ENCODE measurements at regions of chr5 and their contacts with region 1.

Region 1: DNA sequence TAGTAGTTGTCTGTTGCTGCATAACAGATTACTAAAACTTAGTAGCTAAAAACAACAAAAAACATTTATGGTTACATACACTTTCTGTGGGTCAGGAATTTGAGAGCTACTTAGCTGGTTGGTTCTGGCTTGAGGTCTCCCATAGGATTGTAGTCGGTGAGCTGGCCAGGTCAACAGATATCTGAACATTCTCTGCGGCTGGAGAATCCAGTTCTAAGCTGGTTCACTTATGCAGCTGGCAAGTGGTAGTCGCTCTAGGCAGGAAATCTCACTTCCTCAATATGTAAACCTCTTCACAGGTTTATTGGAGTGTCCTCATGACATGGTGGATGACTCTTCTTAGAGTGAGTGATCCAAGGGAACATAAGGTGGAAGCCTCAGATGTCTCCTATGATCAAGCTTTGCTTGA is 65.7 kb upstream of the TNFAIP8 start:
- DNase-seq: peak; percentile 66
- ATAC-seq: peak; percentile 90
- H3K4me3 ChIP-seq: peak overlapping the region; percentile 38
- H3K27ac ChIP-seq: peak overlapping the region; percentile 84
- H3K4me1 ChIP-seq: peaks cover 46% of the 10 kb centered on the region
- H3K27me3 ChIP-seq: no peaks in the 10 kb centered on the region
- CTCF ChIP-seq: no peak
- EP300 ChIP-seq: peak; percentile 69 to 79; a peak in 2 of 4 replicates
- POLR2A ChIP-seq: no peak
- RAD21 ChIP-seq: no peak

Region 2: DNA sequence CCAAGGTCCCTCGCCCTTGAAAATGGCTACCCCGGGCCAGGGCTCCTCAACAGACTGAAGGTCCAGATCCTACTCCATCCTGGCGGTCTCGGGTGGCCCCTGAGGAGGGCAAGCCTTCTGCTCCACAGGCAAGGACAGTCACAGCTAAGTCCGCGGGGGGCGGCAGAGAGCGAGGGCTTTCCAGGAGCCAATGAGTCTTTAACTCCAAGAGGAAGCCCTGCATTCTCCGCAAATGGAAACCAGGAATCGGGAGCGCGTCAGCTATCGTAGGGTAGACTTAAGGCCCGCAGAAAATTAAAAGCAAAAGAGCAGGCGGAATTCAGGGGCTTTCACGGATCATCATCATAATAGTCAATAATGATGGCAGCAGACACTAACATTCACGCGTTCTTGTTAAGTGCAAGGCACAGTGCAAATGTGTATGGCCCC is 22.2 kb before region 1 on chr5:
- CTCF ChIA-PET with region 1: interaction called, 29 read pairs
- POLR2A ChIA-PET with region 1: interaction called, 57 read pairs
- RAD21 ChIA-PET with region 1: interaction called, 46 read pairs
- SMC1A ChIA-PET with region 1: interaction called, 181 read pairs
- in situ Hi-C with region 1: no loop called
- intact Hi-C with region 1: loop called (anchors 2 kb)
- DNase-seq: peak; percentile 81
- ATAC-seq: peak; percentile 81
- H3K4me3 ChIP-seq: peak overlapping the region; percentile 99
- H3K27ac ChIP-seq: peak overlapping the region; percentile 90
- H3K4me1 ChIP-seq: peaks cover 13% of the 10 kb centered on the region
- H3K27me3 ChIP-seq: no peaks in the 10 kb centered on the region
- CTCF ChIP-seq: peak; percentile 63 to 80 (median 68)
- EP300 ChIP-seq: no peak
- POLR2A ChIP-seq: no peak
- RAD21 ChIP-seq: peak; percentile 46; the same call in 1 of the 2 replicates

Region 3: GRCh38 chr5:119274767-119275130 is 15.4 kb before region 1 on chr5:
- CTCF ChIA-PET with region 1: interaction called, 29 read pairs
- POLR2A ChIA-PET with region 1: interaction called, 57 read pairs
- RAD21 ChIA-PET with region 1: interaction called, 46 read pairs
- SMC1A ChIA-PET with region 1: interaction called, 181 read pairs
- in situ Hi-C with region 1: no loop called
- intact Hi-C with region 1: loop called (anchors 2 kb)
- DNase-seq: no peak
- ATAC-seq: peak; percentile 23
- H3K4me3 ChIP-seq: peak overlapping the region; percentile 65; the same call in 1 of the 2 replicates
- H3K27ac ChIP-seq: peak overlapping the region; percentile 77
- H3K4me1 ChIP-seq: peaks cover 66% of the 10 kb centered on the region
- H3K27me3 ChIP-seq: no peaks in the 10 kb centered on the region
- CTCF ChIP-seq: no peak
- EP300 ChIP-seq: no peak
- POLR2A ChIP-seq: no peak
- RAD21 ChIP-seq: no peak

Region 4: GRCh38 chr5:119302916-119303897 is 13.0 kb after region 1 on chr5:
- CTCF ChIA-PET with region 1: interaction called, 21 read pairs
- POLR2A ChIA-PET with region 1: interaction called, 21 read pairs
- RAD21 ChIA-PET with region 1: interaction called, 9 read pairs
- SMC1A ChIA-PET with region 1: interaction called, 47 read pairs
- in situ Hi-C with region 1: no loop called
- intact Hi-C with region 1: no loop called
- DNase-seq: no peak
- ATAC-seq: peak; percentile 65
- H3K4me3 ChIP-seq: no peak overlapping the region
- H3K27ac ChIP-seq: no peak overlapping the region
- H3K4me1 ChIP-seq: peaks cover 23% of the 10 kb centered on the region
- H3K27me3 ChIP-seq: no peaks in the 10 kb centered on the region
- CTCF ChIP-seq: no peak
- EP300 ChIP-seq: no peak
- POLR2A ChIP-seq: no peak
- RAD21 ChIP-seq: no peak

Region 5: GRCh38 chr5:119309326-119309725 is 19.2 kb after region 1 on chr5:
- CTCF ChIA-PET with region 1: interaction called, 24 read pairs
- POLR2A ChIA-PET with region 1: interaction called, 21 read pairs
- RAD21 ChIA-PET with region 1: interaction called, 63 read pairs
- SMC1A ChIA-PET with region 1: interaction called, 69 read pairs
- in situ Hi-C with region 1: no loop called
- intact Hi-C with region 1: no loop called
- DNase-seq: no peak
- ATAC-seq: peak; percentile 18
- H3K4me3 ChIP-seq: 0 out of 2 replicates have a peak overlapping the region, but pooled peaks have one; percentile 1
- H3K27ac ChIP-seq: peak overlapping the region; percentile 72
- H3K4me1 ChIP-seq: peaks cover 41% of the 10 kb centered on the region
- H3K27me3 ChIP-seq: no peaks in the 10 kb centered on the region
- CTCF ChIP-seq: no peak
- EP300 ChIP-seq: no peak
- POLR2A ChIP-seq: no peak
- RAD21 ChIP-seq: no peak

Region 6: GRCh38 chr5:119322948-119323537 is 32.9 kb after region 1 on chr5:
- CTCF ChIA-PET with region 1: interaction called, 4 read pairs
- POLR2A ChIA-PET with region 1: interaction called, 8 read pairs
- RAD21 ChIA-PET with region 1: interaction called, 10 read pairs
- SMC1A ChIA-PET with region 1: interaction called, 3 read pairs
- in situ Hi-C with region 1: no loop called
- intact Hi-C with region 1: no loop called
- DNase-seq: no peak
- ATAC-seq: peak; percentile 64
- H3K4me3 ChIP-seq: peak overlapping the region; percentile 26; the same call in 1 of the 2 replicates
- H3K27ac ChIP-seq: peak overlapping the region; percentile 87
- H3K4me1 ChIP-seq: peaks cover 52% of the 10 kb centered on the region
- H3K27me3 ChIP-seq: no peaks in the 10 kb centered on the region
- CTCF ChIP-seq: no peak
- EP300 ChIP-seq: no peak
- POLR2A ChIP-seq: no peak
- RAD21 ChIP-seq: no peak

Region 7: DNA sequence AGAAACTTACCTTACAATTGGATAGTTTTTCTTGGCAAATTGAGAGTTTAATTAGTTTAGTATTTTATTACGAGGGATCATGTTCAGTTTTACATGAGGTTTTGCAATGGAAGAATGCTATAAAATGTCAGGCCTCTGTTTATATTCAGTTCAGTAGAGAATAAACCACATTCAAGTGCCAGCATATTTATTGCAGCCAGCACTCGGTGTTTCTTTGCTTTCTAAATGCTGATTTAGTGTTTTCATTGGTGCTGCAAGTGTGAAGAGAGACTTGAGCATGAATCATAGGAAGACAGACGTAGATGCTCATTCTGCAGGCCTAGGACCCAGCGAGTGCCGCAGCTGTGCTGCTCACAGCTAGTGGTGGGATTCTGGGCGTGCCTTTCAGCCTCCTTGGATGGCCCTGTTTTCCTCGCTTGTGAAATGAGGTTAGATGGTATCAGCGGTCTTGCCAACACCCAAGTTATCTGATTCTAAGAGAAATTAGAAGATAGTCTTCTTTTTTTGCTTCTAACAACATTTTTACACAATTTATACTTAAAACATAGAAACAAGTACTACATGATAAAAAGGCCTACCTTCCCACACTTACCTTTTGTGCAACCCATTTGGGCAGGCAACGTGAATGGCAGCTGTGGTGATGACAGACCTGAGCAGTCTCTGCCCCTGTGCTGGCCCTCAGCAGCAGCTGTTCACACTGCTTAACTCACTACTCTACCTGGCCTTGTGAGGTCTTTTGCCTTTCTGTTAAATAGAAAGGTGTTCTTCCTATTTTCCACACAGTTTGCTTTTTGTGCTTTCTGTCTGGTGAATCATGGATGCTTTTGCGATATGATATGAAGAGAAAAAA is 38.8 kb after region 1 on chr5:
- CTCF ChIA-PET with region 1: interaction called, 6 read pairs
- POLR2A ChIA-PET with region 1: interaction called, 8 read pairs
- RAD21 ChIA-PET with region 1: interaction called, 15 read pairs
- SMC1A ChIA-PET with region 1: interaction called, 23 read pairs
- in situ Hi-C with region 1: no loop called
- intact Hi-C with region 1: no loop called
- DNase-seq: no peak
- ATAC-seq: no peak
- H3K4me3 ChIP-seq: no peak overlapping the region
- H3K27ac ChIP-seq: peak overlapping the region; percentile 7; the same call in 1 of the 2 replicates
- H3K4me1 ChIP-seq: peaks cover 48% of the 10 kb centered on the region
- H3K27me3 ChIP-seq: no peaks in the 10 kb centered on the region
- CTCF ChIP-seq: no peak
- EP300 ChIP-seq: no peak
- POLR2A ChIP-seq: no peak
- RAD21 ChIP-seq: no peak